SK-N-SH (cell line): ENCODE measurements at regions of chr1 and their contacts with region 1.

Region 1: DNA sequence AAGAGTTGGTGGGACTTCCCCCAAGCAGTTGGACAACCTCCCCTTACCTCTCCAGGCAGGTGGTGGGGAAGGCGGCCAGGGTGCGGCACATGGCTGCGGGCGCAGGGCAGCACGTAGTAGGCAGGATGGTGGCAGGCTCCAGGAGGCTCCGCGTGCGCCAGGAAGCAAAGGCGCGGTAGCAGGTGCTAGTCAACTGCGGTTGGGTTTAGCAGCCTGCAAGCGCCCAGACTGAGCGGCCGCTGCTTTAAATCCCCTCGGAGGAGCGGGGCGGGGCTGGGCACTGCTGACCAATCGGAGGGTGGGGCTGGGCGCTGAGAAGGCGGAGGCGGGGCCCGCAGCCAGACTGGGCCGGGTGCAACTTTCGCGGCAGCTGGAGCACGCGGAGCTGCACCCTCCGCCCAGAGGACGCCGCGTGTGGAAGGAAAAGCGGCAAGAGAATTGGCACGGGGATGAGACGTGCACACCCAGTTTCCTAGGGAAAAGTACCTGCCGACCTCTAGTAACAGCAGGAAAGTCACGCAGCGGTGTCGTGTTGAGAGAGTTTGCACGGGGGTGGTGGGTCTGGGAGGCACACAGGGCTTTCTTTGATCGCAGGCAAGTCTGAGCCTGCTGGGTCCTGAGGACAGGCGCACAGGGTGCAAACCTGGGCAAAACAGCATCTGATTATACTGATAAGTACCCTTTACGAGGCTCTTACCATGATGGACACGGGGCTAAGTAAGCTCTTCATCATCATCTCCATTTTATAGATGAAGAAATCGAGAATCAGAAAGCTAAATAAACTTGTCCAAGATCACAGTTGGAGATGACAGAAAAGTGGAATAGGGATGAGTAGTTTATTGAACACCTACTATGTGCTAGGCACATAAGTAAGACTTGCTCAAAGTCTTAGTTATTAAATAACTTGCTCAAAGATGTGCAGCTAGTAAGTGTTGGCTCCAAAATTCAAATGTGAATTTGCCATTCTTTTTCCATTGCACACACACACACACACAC is at the start of gene RGS16:
- DNase-seq: peak; percentile 98
- H3K4me3 ChIP-seq: peak within 1 kb of the TSS; percentile 57 to 67
- H3K27ac ChIP-seq: peak within 1 kb of the TSS in 1 of 2 experiments; percentile 63; a peak in 2 of 4 replicates
- H3K4me1 ChIP-seq: peaks cover 0 to 29% of the 10 kb centered on the region in 2 experiments; a peak in 1 of 4 replicates
- H3K27me3 ChIP-seq: no peaks in the 10 kb centered on the region
- CTCF ChIP-seq: no peak
- EP300 ChIP-seq: no peak
- RAD21 ChIP-seq: no peak
- polyA plus RNA-seq, gene RGS16: 0.79 and 1.7 TPM in 2 replicates

Region 2: DNA sequence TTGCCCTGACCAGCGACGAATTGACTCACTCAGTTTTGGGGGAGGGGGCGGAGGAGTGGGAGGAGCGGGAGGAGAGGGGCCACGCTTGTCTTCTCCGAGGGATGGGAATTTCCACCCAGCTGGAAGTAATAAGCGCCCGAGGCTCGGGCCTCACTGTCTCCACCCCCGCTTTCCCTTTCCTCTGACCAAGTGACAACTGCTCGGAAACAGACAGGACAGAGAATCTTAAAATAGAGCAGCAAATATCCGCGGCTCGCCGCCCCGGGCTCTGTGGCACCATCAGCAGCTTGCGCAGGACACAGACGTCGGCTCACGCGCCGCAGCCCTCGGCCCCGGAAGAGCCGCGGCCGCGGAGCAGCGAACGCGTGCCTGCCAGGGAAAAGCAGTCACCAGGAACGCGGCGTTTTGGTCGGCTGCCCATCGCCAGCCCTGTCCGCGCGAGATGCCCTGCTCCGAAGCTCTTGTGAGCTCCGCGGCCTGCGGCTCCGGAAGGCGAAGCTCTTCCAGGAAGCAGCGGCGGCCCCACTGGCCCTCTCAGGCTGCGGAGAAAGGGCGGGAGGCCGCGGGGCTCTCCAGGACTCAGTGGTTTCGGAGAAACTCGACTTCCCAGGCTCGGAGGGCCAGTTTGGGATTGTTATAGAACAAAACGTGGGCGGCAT is 10.5 kb after region 1 on chr1:
- CTCF ChIA-PET with region 1: interaction called, 17 read pairs
- POLR2A ChIA-PET with region 1: no interaction called
- DNase-seq: peak; percentile 85
- H3K4me3 ChIP-seq: peak overlapping the region; percentile 45 to 53
- H3K27ac ChIP-seq: peak overlapping the region; percentile 60 to 90
- H3K4me1 ChIP-seq: peaks cover 18 to 21% of the 10 kb centered on the region in 2 experiments
- H3K27me3 ChIP-seq: no peaks in the 10 kb centered on the region
- CTCF ChIP-seq: no peak
- EP300 ChIP-seq: peak in 1 of 2 experiments; percentile 47; a peak in 1 of 4 replicates
- RAD21 ChIP-seq: no peak

Region 3: DNA sequence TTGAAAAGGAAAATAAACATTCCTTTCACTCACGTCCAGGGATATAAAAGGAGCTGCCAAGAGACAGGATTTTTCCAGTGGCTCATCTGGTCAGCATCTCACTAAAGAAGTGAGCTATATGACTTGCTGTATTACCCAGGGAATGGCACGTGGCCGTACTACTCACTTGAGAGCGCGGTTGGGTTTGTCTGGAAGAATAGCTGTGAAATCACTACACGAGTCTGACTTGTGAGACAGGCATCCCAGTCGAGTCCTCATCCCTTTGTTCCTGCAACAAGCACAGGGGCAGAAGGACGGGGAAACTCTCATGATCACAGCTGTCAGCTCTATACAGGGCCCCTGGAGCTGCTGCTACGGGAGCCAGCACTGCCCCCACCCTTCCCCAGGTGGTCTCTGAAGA is 62.2 kb after region 1 on chr1:
- CTCF ChIA-PET with region 1: interaction called, 17 read pairs
- POLR2A ChIA-PET with region 1: no interaction called
- DNase-seq: no peak
- H3K4me3 ChIP-seq: no peak overlapping the region
- H3K27ac ChIP-seq: no peak overlapping the region
- H3K4me1 ChIP-seq: peaks cover 0 to 10% of the 10 kb centered on the region in 2 experiments; a peak in 2 of 4 replicates
- H3K27me3 ChIP-seq: peaks cover 6% of the 10 kb centered on the region; the same call in 1 of the 2 replicates
- CTCF ChIP-seq: no peak
- EP300 ChIP-seq: no peak
- RAD21 ChIP-seq: no peak

Region 4: DNA sequence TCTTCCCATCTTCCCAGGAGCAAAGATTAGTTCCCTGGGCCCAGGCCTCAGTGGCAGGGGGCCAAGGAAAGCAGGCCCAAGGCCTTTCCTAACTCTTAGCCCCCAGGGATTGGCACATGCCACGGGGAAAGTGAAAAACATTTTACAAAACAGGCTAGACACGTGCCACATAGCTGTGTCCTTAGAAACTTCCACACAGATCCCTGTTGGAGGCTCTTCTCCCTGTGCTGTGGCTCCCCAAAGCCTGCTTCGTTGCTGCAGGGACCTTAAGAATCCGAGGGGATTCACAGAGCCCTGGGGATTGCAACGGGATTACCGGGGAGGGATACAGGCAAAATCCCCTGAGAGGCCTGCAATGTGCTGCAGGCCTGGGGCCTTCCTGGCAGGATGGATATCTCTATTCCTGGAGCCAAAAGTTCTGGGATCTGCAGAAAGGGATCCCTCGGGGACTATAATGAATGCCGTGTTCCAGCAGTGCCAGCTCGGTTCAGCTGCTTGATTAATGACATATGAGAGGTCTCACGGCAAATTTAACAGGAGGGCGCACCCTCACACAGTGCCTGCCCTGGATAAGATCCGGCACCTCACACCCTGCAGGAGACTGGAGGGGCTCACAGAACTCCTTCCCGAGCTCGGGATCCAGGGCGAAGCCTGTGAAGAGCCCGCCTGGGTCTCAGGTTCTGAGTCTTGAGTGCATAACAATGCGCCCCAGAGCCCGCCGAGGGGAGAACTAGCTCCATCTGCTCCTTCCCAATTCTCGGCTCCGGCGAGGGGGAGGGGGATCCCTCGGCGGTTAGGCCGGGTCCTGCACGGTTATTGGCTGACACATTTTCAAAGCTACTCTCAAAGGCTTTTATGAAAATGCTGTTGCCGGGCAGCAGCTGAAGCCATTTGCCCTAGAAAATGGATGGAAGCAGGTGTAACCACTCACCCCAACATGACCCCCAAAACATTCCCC is 95.2 kb after region 1 on chr1:
- CTCF ChIA-PET with region 1: interaction called, 10 read pairs
- POLR2A ChIA-PET with region 1: no interaction called
- DNase-seq: no peak
- H3K4me3 ChIP-seq: no peak overlapping the region
- H3K27ac ChIP-seq: peak overlapping the region in 1 of 2 experiments; percentile 11; a peak in 1 of 4 replicates
- H3K4me1 ChIP-seq: peaks cover 0 to 22% of the 10 kb centered on the region in 2 experiments; a peak in 2 of 4 replicates
- H3K27me3 ChIP-seq: no peaks in the 10 kb centered on the region; the same call in 1 of the 2 replicates
- CTCF ChIP-seq: no peak
- EP300 ChIP-seq: no peak
- RAD21 ChIP-seq: no peak

Region 5: GRCh38 chr1:182715531-182715930 is 111.1 kb after region 1 on chr1:
- CTCF ChIA-PET with region 1: no interaction called
- POLR2A ChIA-PET with region 1: no interaction called
- DNase-seq: no peak
- H3K4me3 ChIP-seq: no peak overlapping the region
- H3K27ac ChIP-seq: no peak overlapping the region
- H3K4me1 ChIP-seq: peaks cover 0 to 4% of the 10 kb centered on the region in 2 experiments; a peak in 1 of 4 replicates
- H3K27me3 ChIP-seq: no peaks in the 10 kb centered on the region; the same call in 1 of the 2 replicates
- CTCF ChIP-seq: no peak
- EP300 ChIP-seq: no peak
- RAD21 ChIP-seq: no peak

Region 6: GRCh38 chr1:182789138-182790076 is 184.9 kb after region 1 on chr1 and contains the start of gene NPL:
- CTCF ChIA-PET with region 1: interaction called, 829 read pairs
- POLR2A ChIA-PET with region 1: interaction called, 3 read pairs
- DNase-seq: peak; percentile 95
- H3K4me3 ChIP-seq: peak within 1 kb of the TSS; percentile 61 to 63
- H3K27ac ChIP-seq: peak within 1 kb of the TSS in 1 of 2 experiments; percentile 64; a peak in 2 of 4 replicates
- H3K4me1 ChIP-seq: peaks cover 5 to 9% of the 10 kb centered on the region in 2 experiments; a peak in 2 of 4 replicates
- H3K27me3 ChIP-seq: peaks cover 23% of the 10 kb centered on the region; the same call in 1 of the 2 replicates
- CTCF ChIP-seq: peak; percentile 10; the same call in 1 of the 2 replicates
- EP300 ChIP-seq: no peak
- RAD21 ChIP-seq: no peak
- polyA plus RNA-seq, gene NPL: 1.5 and 2.5 TPM in 2 replicates

Region 7: GRCh38 chr1:182845379-182845778 is 240.9 kb after region 1 on chr1:
- CTCF ChIA-PET with region 1: no interaction called
- POLR2A ChIA-PET with region 1: no interaction called
- DNase-seq: no peak
- H3K4me3 ChIP-seq: no peak overlapping the region
- H3K27ac ChIP-seq: no peak overlapping the region
- H3K4me1 ChIP-seq: peaks cover 15 to 18% of the 10 kb centered on the region in 2 experiments; a peak in 3 of 4 replicates
- H3K27me3 ChIP-seq: no peaks in the 10 kb centered on the region
- CTCF ChIP-seq: no peak
- EP300 ChIP-seq: no peak
- RAD21 ChIP-seq: no peak